Caco-2 (cell line): ENCODE measurements at regions of chr4 and their contacts with region 1.

Region 1: DNA sequence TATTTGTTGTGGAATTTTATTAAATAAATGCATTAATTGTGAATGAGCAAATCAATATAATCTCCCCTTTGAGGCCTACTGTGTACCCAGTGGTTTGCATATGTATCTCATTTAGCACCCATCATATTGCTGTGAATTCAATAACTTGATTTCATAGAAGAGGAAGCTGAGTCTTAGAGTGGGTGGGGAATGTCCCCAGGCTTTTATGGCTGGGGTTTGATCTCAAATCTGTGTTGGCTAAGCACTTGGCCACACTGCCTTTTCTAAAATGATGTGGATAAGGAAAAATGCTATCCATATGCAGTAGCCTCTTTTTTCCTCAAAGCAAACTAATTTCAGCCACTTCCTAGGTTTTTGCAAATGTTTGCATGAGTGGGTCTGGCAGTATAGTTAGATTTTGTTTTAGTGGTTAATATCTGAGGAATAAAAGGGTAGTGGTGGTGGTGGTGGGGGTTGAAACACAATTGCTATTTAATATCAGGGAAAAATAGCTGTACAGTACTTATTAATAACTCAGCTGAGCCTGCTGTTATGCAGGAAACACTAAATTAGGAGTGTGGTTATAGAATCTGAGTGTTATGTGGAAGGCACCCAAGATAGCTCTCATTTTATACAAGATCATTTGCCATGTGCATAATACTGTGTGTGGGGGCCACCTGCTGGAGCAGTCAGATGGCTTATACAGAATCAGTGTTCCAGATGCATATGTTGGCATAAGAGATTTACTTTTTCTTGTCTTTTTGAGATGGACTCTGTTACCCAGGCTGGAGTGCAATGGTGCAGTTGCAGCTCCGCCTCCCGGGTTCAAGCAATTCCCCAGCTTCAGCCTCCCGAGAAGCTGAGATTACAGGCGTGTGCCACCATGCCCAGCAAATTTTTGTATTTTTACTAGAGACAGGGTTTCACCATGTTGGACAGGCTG is 108.0 kb downstream of the TMEM131L start:
- DNase-seq: peak; percentile 58 to 60
- H3K4me3 ChIP-seq: no peak overlapping the region
- H3K4me3 Mint-ChIP-seq: no peak overlapping the region
- H3K27ac Mint-ChIP-seq: no peak overlapping the region
- H3K4me1 ChIP-seq: peaks cover 40% of the 10 kb centered on the region
- H3K4me1 Mint-ChIP-seq: peaks cover 8% of the 10 kb centered on the region
- H3K27me3 ChIP-seq: no peaks in the 10 kb centered on the region
- H3K27me3 Mint-ChIP-seq: no peaks in the 10 kb centered on the region
- CTCF ChIP-seq: peak; percentile 31 to 71

Region 2: DNA sequence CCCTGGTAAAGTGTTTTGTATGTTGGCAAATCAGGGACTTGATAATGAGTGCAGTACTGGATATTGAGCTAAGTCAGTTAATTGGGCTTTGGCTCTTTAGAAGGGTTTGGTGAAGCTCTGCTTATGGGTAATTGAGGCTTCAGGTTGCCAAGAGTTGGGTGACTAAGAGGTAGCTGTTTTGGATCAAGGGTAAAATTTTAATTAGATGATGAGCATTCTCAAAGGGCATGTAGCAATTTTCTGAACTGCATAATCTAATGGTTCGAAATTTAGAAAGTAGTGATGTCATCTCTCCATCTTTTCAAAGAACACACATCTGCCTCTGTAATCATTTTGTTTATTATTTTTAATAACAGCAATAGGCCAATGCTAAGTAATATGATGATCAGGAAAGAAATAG is 375.4 kb before region 1 on chr4:
- CTCF ChIA-PET with region 1: no interaction called
- POLR2A ChIA-PET with region 1: no interaction called
- intact Hi-C with region 1: no loop called
- DNase-seq: no peak
- H3K4me3 ChIP-seq: no peak overlapping the region
- H3K4me3 Mint-ChIP-seq: no peak overlapping the region
- H3K27ac Mint-ChIP-seq: no peak overlapping the region
- H3K4me1 ChIP-seq: peaks cover 7% of the 10 kb centered on the region
- H3K4me1 Mint-ChIP-seq: no peaks in the 10 kb centered on the region
- H3K27me3 ChIP-seq: no peaks in the 10 kb centered on the region
- H3K27me3 Mint-ChIP-seq: no peaks in the 10 kb centered on the region
- CTCF ChIP-seq: no peak

Region 3: DNA sequence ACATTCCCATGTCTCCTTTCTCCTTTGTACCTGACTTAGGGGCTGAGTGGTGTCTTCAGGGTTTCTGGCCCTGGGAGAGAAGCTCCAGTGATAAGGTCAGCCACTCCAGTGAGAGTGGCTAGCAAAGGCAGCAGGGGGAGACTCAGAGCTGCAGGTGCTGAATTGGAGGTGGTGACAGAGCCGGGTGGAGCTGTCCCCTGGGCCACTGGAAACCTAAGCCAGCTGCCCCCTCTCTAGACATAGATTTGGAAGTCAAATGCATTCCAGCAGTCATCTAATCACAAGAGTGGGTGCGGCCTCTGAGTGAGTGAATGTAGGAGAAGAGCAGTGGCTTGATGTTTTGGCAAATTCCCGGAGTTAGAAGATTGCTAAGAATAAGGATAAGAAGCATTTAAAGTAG is 341.4 kb before region 1 on chr4:
- CTCF ChIA-PET with region 1: no interaction called
- POLR2A ChIA-PET with region 1: no interaction called
- intact Hi-C with region 1: loop called (anchors 10 kb)
- DNase-seq: peak; percentile 68 to 71
- H3K4me3 ChIP-seq: no peak overlapping the region
- H3K4me3 Mint-ChIP-seq: no peak overlapping the region
- H3K27ac Mint-ChIP-seq: peak overlapping the region; percentile 40
- H3K4me1 ChIP-seq: peaks cover 8% of the 10 kb centered on the region
- H3K4me1 Mint-ChIP-seq: peaks cover 20% of the 10 kb centered on the region
- H3K27me3 ChIP-seq: no peaks in the 10 kb centered on the region
- H3K27me3 Mint-ChIP-seq: no peaks in the 10 kb centered on the region
- CTCF ChIP-seq: peak; percentile 48

Region 4: GRCh38 chr4:153432968-153433753 is 141.0 kb before region 1 on chr4:
- CTCF ChIA-PET with region 1: interaction called, 12 read pairs
- POLR2A ChIA-PET with region 1: no interaction called
- intact Hi-C with region 1: loop called (anchors 1 kb)
- DNase-seq: peak; percentile 69 to 73
- H3K4me3 ChIP-seq: no peak overlapping the region
- H3K4me3 Mint-ChIP-seq: no peak overlapping the region
- H3K27ac Mint-ChIP-seq: peak overlapping the region; percentile 6
- H3K4me1 ChIP-seq: no peaks in the 10 kb centered on the region; the same call in 1 of the 2 replicates
- H3K4me1 Mint-ChIP-seq: peaks cover 7% of the 10 kb centered on the region
- H3K27me3 ChIP-seq: no peaks in the 10 kb centered on the region
- H3K27me3 Mint-ChIP-seq: no peaks in the 10 kb centered on the region
- CTCF ChIP-seq: peak; percentile 37 to 67

Region 5: GRCh38 chr4:153486281-153487151 is 87.6 kb before region 1 on chr4:
- CTCF ChIA-PET with region 1: interaction called, 14 read pairs
- POLR2A ChIA-PET with region 1: no interaction called
- intact Hi-C with region 1: no loop called
- DNase-seq: peak; percentile 71 to 77
- H3K4me3 ChIP-seq: no peak overlapping the region
- H3K4me3 Mint-ChIP-seq: peak overlapping the region; percentile 47
- H3K27ac Mint-ChIP-seq: peak overlapping the region; percentile 73
- H3K4me1 ChIP-seq: peaks cover 32% of the 10 kb centered on the region
- H3K4me1 Mint-ChIP-seq: peaks cover 25% of the 10 kb centered on the region
- H3K27me3 ChIP-seq: no peaks in the 10 kb centered on the region
- H3K27me3 Mint-ChIP-seq: no peaks in the 10 kb centered on the region
- CTCF ChIP-seq: no peak

Region 6: DNA sequence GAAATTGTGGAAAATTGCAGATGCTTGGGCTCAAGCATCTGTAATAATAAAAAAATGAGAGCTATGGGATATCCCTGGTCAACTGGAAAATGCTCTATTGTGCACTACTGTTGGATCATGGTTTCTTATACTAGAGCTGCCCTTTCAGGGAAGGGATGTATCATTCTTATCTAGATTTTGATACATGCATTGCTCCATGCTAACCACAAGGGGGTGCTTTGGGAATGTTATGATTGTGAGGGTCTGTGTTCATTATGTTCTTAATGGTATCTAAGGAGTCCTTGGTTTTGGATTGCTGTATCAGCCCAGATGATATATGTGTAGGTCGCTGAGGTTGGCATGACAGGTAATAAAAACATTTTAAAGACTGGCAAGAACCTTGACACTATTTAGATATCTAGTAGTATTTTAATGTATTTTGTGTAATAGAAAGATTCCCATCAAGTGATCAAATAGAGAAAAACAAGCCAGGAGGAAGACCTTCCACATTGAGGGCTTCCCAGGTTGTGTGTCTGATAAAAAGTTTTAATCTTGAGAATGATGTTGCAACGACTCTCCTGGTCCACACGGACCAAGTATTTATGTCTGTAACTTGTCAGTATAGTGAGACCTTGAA is 60.7 kb after region 1 on chr4:
- CTCF ChIA-PET with region 1: no interaction called
- POLR2A ChIA-PET with region 1: no interaction called
- intact Hi-C with region 1: no loop called
- DNase-seq: peak in 1 of 2 experiments; percentile 27
- H3K4me3 ChIP-seq: no peak overlapping the region
- H3K4me3 Mint-ChIP-seq: no peak overlapping the region
- H3K27ac Mint-ChIP-seq: no peak overlapping the region
- H3K4me1 ChIP-seq: no peaks in the 10 kb centered on the region
- H3K4me1 Mint-ChIP-seq: peaks cover 1% of the 10 kb centered on the region
- H3K27me3 ChIP-seq: no peaks in the 10 kb centered on the region
- H3K27me3 Mint-ChIP-seq: no peaks in the 10 kb centered on the region
- CTCF ChIP-seq: peak; percentile 48 to 50

Region 7: DNA sequence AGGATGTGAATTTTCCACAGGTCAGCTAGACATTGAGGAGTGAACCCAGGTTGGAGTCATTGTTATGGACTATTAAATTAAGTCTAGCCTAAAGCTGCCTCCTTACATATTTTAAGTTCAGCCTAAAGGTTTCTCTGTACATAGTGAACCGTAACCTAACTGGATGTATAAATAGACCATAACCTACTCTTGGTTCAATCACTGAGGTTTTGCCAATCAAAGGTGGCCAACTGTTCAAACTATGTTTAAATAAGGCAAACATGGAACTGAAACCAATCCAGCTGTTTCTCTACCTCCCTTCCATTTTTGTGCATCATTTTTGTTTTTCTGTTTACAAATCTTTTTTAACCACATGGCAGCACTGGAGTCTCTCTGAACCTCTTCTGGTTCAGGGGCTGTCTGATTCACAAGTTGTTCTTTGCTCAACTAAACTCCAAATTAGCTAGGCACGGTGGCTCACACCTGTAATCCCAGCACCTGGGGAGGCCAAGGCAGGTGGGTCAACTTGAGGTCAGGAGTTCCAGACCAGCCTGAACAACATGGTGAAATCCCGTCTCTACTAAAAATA is 258.7 kb after region 1 on chr4:
- CTCF ChIA-PET with region 1: no interaction called
- POLR2A ChIA-PET with region 1: no interaction called
- intact Hi-C with region 1: no loop called
- DNase-seq: no peak
- H3K4me3 ChIP-seq: no peak overlapping the region
- H3K4me3 Mint-ChIP-seq: no peak overlapping the region
- H3K27ac Mint-ChIP-seq: no peak overlapping the region
- H3K4me1 ChIP-seq: no peaks in the 10 kb centered on the region
- H3K4me1 Mint-ChIP-seq: no peaks in the 10 kb centered on the region
- H3K27me3 ChIP-seq: no peaks in the 10 kb centered on the region
- H3K27me3 Mint-ChIP-seq: peaks cover 13% of the 10 kb centered on the region
- CTCF ChIP-seq: no peak